Caco-2 (cell line): ENCODE measurements at regions of chr11 and their contacts with region 1.

Region 1: DNA sequence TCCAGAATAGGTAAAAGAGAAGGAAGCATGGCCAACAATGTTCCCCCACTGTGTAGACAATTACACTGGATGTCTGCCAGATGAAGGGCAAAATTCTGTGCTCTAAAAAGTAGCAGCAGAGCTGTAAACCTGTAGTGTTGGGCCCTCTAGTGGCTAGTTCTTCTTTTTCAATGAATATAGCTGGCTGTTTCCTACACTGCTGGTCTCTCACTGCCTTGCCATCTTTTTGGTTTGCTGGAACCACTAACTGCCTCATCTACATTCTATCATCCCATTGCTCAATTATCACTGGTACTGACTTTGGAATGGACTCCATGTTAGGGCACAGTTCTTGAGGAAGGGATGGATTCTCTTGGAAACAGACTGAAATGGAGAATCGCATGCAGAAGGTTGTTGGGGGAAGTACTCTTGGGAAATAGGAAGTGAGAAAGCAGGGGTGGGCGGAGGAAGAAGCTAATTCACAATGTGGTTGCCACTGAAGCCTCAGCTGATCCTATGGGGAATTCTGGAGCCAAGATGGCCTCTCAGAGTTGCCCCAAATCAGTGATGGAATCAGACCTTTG is 17.9 kb downstream of the KCNE3 start:
- DNase-seq: peak; percentile 60 to 81
- H3K4me3 ChIP-seq: no peak overlapping the region
- H3K4me3 Mint-ChIP-seq: no peak overlapping the region
- H3K27ac Mint-ChIP-seq: no peak overlapping the region
- H3K4me1 ChIP-seq: peaks cover 12% of the 10 kb centered on the region
- H3K4me1 Mint-ChIP-seq: peaks cover 9% of the 10 kb centered on the region
- H3K27me3 ChIP-seq: no peaks in the 10 kb centered on the region
- H3K27me3 Mint-ChIP-seq: no peaks in the 10 kb centered on the region
- CTCF ChIP-seq: peak; percentile 84 to 88

Region 2: GRCh38 chr11:73995247-73995646 is 454.2 kb before region 1 on chr11:
- CTCF ChIA-PET with region 1: no interaction called
- POLR2A ChIA-PET with region 1: no interaction called
- intact Hi-C with region 1: no loop called
- DNase-seq: no peak
- H3K4me3 ChIP-seq: no peak overlapping the region
- H3K4me3 Mint-ChIP-seq: no peak overlapping the region
- H3K27ac Mint-ChIP-seq: no peak overlapping the region
- H3K4me1 ChIP-seq: no peaks in the 10 kb centered on the region
- H3K4me1 Mint-ChIP-seq: no peaks in the 10 kb centered on the region
- H3K27me3 ChIP-seq: no peaks in the 10 kb centered on the region
- H3K27me3 Mint-ChIP-seq: no peaks in the 10 kb centered on the region
- CTCF ChIP-seq: no peak

Region 3: DNA sequence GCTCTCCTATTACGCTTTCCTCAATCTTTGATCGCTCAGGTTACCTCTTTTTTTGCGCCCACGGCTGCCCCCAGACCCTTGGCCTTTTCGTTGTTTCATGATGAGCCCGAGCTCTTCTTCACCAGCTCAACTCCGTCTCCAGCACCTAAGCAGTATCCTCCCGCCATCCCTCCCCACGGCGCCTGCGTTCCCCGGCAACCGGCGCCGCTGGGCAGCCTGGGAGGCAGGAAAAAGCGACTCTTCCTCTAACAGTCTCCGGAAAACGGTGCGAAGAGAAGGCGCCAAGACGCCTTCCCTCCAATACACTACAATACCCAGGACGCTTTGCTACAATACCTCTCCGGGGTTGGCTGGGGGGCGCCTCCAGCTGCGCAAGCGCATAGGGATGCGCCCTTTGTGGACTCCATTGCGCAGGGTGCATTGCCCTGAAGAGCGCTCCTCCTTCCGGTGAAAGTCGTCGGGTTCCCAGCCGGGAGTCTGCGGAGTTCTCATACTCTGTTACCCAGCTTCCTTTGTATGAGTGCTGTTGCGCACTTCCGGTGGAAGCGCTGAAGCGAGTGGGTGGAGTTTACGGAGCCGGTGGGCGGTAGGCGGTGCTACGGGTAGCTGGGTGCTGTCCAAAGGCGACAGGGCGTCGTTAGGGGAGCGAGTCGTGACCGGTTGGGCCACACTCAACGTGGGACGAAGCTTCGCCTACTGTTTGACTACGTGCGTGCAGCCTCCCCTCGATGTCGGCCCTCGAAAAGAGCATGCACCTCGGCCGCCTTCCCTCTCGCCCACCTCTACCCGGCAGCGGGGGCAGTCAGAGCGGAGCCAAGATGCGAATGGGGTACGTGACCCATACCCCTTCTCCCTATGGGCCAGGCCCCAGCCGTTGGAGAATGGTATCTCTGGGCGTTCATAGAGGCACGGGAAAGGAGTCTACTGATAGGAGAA is 278.5 kb before region 1 on chr11 and contains the starts of genes C2CD3 and PPME1:
- CTCF ChIA-PET with region 1: interaction called, 4 read pairs
- POLR2A ChIA-PET with region 1: no interaction called
- intact Hi-C with region 1: loop called (anchors 5 kb)
- DNase-seq: peak; percentile 100
- H3K4me3 ChIP-seq: peak within 1 kb of the TSS; percentile 75
- H3K4me3 Mint-ChIP-seq: no peak within 1 kb of the TSS
- H3K27ac Mint-ChIP-seq: no peak within 1 kb of the TSS
- H3K4me1 ChIP-seq: peaks cover 32% of the 10 kb centered on the region
- H3K4me1 Mint-ChIP-seq: peaks cover 6% of the 10 kb centered on the region
- H3K27me3 ChIP-seq: no peaks in the 10 kb centered on the region
- H3K27me3 Mint-ChIP-seq: no peaks in the 10 kb centered on the region
- CTCF ChIP-seq: peak; percentile 59 to 63
- total RNA-seq, gene C2CD3: 47.0 and 47.5 TPM in 2 replicates
- total RNA-seq, gene PPME1: 109 and 114 TPM in 2 replicates

Region 4: GRCh38 chr11:74269161-74269811 is 180.2 kb before region 1 on chr11:
- CTCF ChIA-PET with region 1: interaction called, 10 read pairs
- POLR2A ChIA-PET with region 1: no interaction called
- intact Hi-C with region 1: no loop called
- DNase-seq: no peak
- H3K4me3 ChIP-seq: no peak overlapping the region
- H3K4me3 Mint-ChIP-seq: no peak overlapping the region
- H3K27ac Mint-ChIP-seq: no peak overlapping the region
- H3K4me1 ChIP-seq: peaks cover 22% of the 10 kb centered on the region
- H3K4me1 Mint-ChIP-seq: peaks cover 20% of the 10 kb centered on the region
- H3K27me3 ChIP-seq: peaks cover 1% of the 10 kb centered on the region; the same call in 1 of the 2 replicates
- H3K27me3 Mint-ChIP-seq: no peaks in the 10 kb centered on the region
- CTCF ChIP-seq: no peak

Region 5: GRCh38 chr11:74388678-74389327 is 60.6 kb before region 1 on chr11:
- CTCF ChIA-PET with region 1: interaction called, 65 read pairs
- POLR2A ChIA-PET with region 1: no interaction called
- intact Hi-C with region 1: loop called (anchors 1 kb)
- DNase-seq: peak; percentile 57 to 80
- H3K4me3 ChIP-seq: no peak overlapping the region
- H3K4me3 Mint-ChIP-seq: no peak overlapping the region
- H3K27ac Mint-ChIP-seq: no peak overlapping the region
- H3K4me1 ChIP-seq: no peaks in the 10 kb centered on the region
- H3K4me1 Mint-ChIP-seq: no peaks in the 10 kb centered on the region
- H3K27me3 ChIP-seq: no peaks in the 10 kb centered on the region
- H3K27me3 Mint-ChIP-seq: peaks cover 7% of the 10 kb centered on the region
- CTCF ChIP-seq: peak; percentile 88 to 91

Region 6: DNA sequence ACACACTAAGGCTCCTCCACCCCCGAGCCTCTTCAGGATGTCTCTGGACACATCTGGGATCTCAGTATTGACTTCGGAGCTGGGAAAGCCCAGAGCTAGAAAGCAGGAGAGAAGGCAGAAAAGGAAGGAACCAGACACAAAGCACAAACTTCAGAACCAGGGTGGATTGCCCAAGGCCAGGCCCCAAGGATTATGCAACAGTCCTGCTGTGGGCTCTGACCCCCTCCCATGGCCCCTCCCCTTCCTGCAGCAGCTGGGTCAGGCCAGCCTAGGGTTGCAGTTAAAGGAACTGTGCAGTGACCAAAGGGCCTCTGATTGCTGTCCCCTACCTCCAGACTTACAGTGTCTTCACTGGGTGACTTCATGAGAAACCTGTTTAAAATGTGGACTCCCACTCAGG is 12.6 kb after region 1 on chr11:
- CTCF ChIA-PET with region 1: interaction called, 10 read pairs
- POLR2A ChIA-PET with region 1: interaction called, 3 read pairs
- intact Hi-C with region 1: loop called (anchors 1 kb)
- DNase-seq: peak; percentile 88 to 91
- H3K4me3 ChIP-seq: peak overlapping the region; percentile 19
- H3K4me3 Mint-ChIP-seq: peak overlapping the region; percentile 49
- H3K27ac Mint-ChIP-seq: peak overlapping the region; percentile 91
- H3K4me1 ChIP-seq: peaks cover 57% of the 10 kb centered on the region
- H3K4me1 Mint-ChIP-seq: peaks cover 26% of the 10 kb centered on the region
- H3K27me3 ChIP-seq: no peaks in the 10 kb centered on the region
- H3K27me3 Mint-ChIP-seq: no peaks in the 10 kb centered on the region
- CTCF ChIP-seq: no peak

Region 7: DNA sequence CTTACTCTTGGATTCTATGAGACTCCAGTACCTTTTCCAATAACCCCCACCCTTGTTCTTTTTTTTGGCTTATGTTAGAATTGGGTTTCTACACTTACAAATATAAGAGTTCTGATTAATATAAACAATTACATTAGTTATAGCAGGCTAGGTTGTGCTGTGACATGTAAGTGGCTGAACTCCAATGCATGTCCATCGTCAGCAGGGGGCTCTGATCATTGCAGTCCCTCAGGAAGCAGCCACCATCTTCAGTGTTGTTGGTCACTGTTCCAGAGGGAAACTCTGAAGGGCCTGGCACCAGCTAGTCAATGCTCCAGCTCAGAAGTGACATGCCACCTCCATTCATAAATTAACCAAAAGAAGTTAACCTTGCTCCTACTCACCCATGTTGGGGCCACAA is 38.4 kb after region 1 on chr11:
- CTCF ChIA-PET with region 1: interaction called, 34 read pairs
- POLR2A ChIA-PET with region 1: interaction called, 10 read pairs
- intact Hi-C with region 1: loop called (anchors 1 kb)
- DNase-seq: peak in 1 of 2 experiments; percentile 66
- H3K4me3 ChIP-seq: no peak overlapping the region
- H3K4me3 Mint-ChIP-seq: no peak overlapping the region
- H3K27ac Mint-ChIP-seq: no peak overlapping the region
- H3K4me1 ChIP-seq: peaks cover 7% of the 10 kb centered on the region
- H3K4me1 Mint-ChIP-seq: peaks cover 15% of the 10 kb centered on the region
- H3K27me3 ChIP-seq: no peaks in the 10 kb centered on the region
- H3K27me3 Mint-ChIP-seq: no peaks in the 10 kb centered on the region
- CTCF ChIP-seq: peak; percentile 64 to 78

Region 8: DNA sequence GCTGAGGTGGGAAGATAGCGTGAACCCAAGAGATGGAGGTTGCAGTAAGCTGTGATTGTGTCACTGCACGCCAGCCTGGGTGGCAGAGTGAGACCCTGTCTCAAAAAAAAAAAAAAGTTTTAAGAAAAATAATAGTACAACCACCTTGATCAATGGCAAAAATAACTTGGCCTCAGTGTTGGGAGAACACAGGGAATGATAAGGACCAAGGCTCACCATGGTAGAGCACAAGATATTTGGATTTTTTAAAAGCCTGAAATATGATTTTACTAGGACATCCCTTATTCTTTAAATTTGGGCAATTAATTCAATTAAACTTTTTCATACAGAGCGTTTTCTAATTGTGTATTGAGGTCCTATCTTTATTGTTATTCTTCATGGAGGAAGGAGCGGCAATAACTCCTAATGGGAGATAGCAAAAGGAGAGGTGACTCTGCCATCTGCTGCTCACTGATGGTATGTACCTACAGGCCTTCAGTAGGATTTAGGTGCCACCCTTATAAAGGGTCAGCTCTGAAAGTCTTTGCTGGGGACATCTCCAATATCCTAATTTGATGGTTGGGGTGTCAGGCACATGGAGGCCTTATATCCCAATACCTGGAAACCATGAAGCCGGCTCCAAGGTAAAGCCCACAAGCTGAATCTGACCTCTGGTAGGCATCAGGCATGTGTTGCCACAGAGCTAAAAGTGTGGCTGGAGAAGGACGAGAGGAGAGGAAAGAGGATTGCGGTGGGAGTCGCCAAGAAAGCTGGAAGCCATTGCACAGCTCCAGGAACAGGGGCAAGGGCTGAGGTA is 121.0 kb after region 1 on chr11:
- CTCF ChIA-PET with region 1: interaction called, 196 read pairs
- POLR2A ChIA-PET with region 1: no interaction called
- intact Hi-C with region 1: loop called (anchors 1 kb)
- DNase-seq: peak; percentile 72 to 78
- H3K4me3 ChIP-seq: no peak overlapping the region
- H3K4me3 Mint-ChIP-seq: no peak overlapping the region
- H3K27ac Mint-ChIP-seq: no peak overlapping the region
- H3K4me1 ChIP-seq: peaks cover 12% of the 10 kb centered on the region; the same call in 1 of the 2 replicates
- H3K4me1 Mint-ChIP-seq: peaks cover 17% of the 10 kb centered on the region
- H3K27me3 ChIP-seq: no peaks in the 10 kb centered on the region
- H3K27me3 Mint-ChIP-seq: no peaks in the 10 kb centered on the region
- CTCF ChIP-seq: peak; percentile 89 to 95

Region 9: GRCh38 chr11:74791333-74792100 is 342.1 kb after region 1 on chr11:
- CTCF ChIA-PET with region 1: no interaction called
- POLR2A ChIA-PET with region 1: no interaction called
- intact Hi-C with region 1: no loop called
- DNase-seq: no peak
- H3K4me3 ChIP-seq: no peak overlapping the region
- H3K4me3 Mint-ChIP-seq: no peak overlapping the region
- H3K27ac Mint-ChIP-seq: no peak overlapping the region
- H3K4me1 ChIP-seq: no peaks in the 10 kb centered on the region
- H3K4me1 Mint-ChIP-seq: no peaks in the 10 kb centered on the region
- H3K27me3 ChIP-seq: no peaks in the 10 kb centered on the region
- H3K27me3 Mint-ChIP-seq: no peaks in the 10 kb centered on the region
- CTCF ChIP-seq: no peak

Region 10: DNA sequence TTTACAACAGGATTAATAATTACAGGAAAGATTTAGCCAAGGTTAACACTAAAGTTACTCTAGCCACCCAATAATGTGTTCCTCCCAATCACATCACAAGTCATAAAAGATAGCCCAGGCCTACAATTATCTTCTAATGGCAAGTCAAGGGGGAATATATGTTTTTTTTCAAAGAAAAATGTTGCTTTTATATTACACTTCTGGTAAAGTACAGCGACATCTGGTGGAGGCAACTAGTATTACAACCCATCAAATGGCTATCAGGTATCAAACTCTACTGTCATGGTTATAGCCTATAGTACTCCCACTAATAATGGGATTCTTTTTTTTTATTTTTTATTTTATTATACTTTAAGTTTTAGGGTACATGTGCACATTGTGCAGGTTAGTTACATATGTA is 427.7 kb after region 1 on chr11:
- CTCF ChIA-PET with region 1: no interaction called
- POLR2A ChIA-PET with region 1: no interaction called
- intact Hi-C with region 1: no loop called
- DNase-seq: peak in 1 of 2 experiments; percentile 37
- H3K4me3 ChIP-seq: no peak overlapping the region
- H3K4me3 Mint-ChIP-seq: no peak overlapping the region
- H3K27ac Mint-ChIP-seq: no peak overlapping the region
- H3K4me1 ChIP-seq: no peaks in the 10 kb centered on the region
- H3K4me1 Mint-ChIP-seq: no peaks in the 10 kb centered on the region
- H3K27me3 ChIP-seq: no peaks in the 10 kb centered on the region
- H3K27me3 Mint-ChIP-seq: no peaks in the 10 kb centered on the region
- CTCF ChIP-seq: peak; percentile 60 to 90